ENCODE measurements at regions of chr16 and their contacts with region 1.

Region 1: DNA sequence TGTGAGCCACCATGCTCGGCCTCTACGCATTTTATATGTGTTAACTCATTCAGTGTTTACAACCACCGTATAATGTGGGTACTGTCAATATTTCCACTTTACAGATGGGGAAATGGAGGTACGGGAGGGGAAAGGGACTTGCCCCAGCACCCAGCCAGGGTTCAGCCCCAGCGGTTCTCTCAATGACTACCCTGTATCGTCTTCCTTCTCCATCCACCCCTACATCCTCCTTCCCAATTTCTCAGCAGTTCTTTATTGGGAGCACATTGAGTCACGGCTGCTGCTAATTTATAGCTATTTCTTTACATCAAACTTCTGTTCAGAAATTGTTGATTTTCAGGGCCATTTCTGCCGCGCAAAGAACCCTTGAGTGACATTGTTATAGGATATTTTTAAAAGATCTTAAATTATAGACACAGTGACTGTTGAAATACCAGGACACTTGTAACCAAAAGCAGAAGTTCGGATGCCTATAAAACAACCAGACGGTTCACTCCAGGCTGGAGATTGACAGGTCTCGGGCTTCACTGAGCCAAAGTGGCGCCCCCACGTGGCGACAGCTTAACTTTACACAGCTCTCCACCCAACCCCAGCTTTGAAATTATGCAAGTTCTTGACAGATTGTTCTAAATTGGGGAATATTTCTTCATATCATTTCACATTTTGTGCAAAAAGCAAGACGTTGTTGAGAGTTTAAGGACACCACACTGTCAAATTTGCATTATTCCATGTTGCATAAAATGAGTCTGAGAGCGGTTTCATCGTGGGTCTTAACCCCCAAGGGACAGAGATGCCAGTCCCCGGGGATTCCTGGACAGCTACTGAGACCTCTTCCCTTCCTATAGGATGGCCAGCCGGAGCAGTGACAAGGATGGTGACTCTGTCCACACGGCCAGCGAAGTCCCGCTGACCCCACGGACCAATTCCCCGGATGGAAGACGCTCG is 11.8 kb downstream of the SYT17 start:
- DNase-seq: peak; percentile 31
- ATAC-seq: peak; percentile 95
- H3K4me3 ChIP-seq: no peak overlapping the region
- H3K27ac ChIP-seq: no peak overlapping the region
- H3K4me1 ChIP-seq: no peaks in the 10 kb centered on the region
- H3K27me3 ChIP-seq: no peaks in the 10 kb centered on the region
- CTCF ChIP-seq: peak; percentile 71 to 91 (median 82)
- POLR2A ChIP-seq: no peak
- RAD21 ChIP-seq: peak; percentile 67

Region 2: DNA sequence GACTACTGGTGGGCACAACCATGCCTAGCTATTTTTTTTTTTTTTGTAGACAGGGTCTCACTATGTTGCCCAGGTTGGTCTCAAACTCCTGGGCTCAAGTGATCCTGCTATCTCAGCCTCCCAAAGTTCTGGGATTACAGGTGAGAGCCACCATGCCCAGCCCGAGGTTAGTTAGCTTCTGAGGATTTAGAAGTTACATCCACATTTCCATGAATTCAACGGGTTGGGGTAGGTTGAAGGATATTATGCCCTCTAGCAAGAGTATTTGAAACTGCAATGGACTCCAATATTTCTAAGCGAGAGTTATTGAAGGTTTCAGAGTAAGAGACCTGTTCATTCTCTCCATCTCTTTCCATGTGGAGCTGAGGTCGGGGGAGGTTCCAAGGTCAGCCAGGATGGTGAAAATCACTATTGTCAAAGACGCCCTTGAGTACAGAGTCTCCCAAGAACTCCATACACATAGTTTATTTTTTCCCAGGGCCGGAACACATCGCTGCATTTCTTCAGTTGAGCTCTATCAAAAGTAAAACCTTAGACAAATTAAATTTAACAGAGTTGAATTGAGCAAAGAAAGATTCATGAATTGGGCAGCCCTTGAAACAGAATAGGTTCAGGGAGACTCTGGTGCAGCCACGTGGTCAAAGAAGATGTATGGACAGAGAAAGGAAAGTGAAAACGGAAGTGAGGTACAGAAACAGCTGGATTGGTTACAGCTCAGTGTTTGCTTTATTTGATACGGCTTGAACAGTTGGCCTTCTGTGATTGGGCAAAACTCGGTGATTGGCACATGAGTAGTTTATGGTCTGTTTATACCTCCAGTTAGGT is 85.1 kb before region 1 on chr16:
- CTCF ChIA-PET with region 1: interaction called, 14 read pairs
- POLR2A ChIA-PET with region 1: no interaction called
- RAD21 ChIA-PET with region 1: no interaction called
- intact Hi-C with region 1: no loop called
- DNase-seq: peak; percentile 56
- ATAC-seq: peak; percentile 76
- H3K4me3 ChIP-seq: no peak overlapping the region
- H3K27ac ChIP-seq: peak overlapping the region; percentile 78; the same call in 1 of the 2 replicates
- H3K4me1 ChIP-seq: peaks cover 24 to 42% of the 10 kb centered on the region in 2 experiments
- H3K27me3 ChIP-seq: no peaks in the 10 kb centered on the region
- CTCF ChIP-seq: peak in 2 of 3 experiments; percentile 8 to 33; a peak in 2 of 6 replicates
- POLR2A ChIP-seq: no peak
- RAD21 ChIP-seq: no peak

Region 3: DNA sequence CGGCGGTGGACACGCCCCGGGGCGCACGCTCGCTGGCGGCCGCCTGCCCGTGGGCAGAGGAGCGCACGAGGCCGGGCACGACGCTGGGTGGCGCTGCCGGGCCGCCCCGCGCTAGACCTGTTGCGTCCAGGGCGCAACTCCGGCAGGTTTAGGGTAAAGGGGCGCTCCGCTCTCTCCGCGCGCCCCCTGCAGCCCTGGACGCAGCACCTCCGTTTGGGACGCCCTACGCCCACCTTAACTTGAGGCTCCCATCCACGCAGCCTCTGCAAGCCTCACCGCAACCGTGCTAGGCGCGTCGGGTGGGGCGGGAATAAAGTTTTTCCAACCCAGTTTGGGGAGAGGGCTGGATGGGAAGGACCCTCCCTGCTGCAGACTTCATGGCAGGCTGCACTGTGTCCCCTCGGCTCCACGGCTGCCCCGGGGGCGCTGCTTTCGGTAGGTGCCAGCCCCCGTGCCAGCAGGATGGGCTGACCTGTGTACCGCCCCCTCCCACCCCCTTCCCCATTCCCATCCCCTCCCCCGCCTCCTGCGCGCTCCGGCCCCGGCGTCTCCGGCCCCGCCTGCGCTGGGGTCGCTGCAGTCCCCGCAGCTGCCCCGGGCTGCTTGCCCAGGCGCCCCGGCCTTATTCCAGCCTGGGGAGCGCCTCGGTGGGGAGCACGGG is 12.0 kb before region 1 on chr16 and contains the start of gene SYT17:
- CTCF ChIA-PET with region 1: interaction called, 11 read pairs
- POLR2A ChIA-PET with region 1: no interaction called
- RAD21 ChIA-PET with region 1: interaction called in 1 of 2 experiments, 4 read pairs
- intact Hi-C with region 1: no loop called
- DNase-seq: peak; percentile 60
- ATAC-seq: peak; percentile 92
- H3K4me3 ChIP-seq: peak within 1 kb of the TSS; percentile 69 to 78
- H3K27ac ChIP-seq: peak within 1 kb of the TSS; percentile 72
- H3K4me1 ChIP-seq: peaks cover 4 to 36% of the 10 kb centered on the region in 2 experiments; a peak in 3 of 4 replicates
- H3K27me3 ChIP-seq: no peaks in the 10 kb centered on the region
- CTCF ChIP-seq: peak; percentile 68 to 95 (median 69)
- POLR2A ChIP-seq: no peak
- RAD21 ChIP-seq: peak; percentile 81
- total RNA-seq, gene SYT17: 10.3 TPM

Region 4: DNA sequence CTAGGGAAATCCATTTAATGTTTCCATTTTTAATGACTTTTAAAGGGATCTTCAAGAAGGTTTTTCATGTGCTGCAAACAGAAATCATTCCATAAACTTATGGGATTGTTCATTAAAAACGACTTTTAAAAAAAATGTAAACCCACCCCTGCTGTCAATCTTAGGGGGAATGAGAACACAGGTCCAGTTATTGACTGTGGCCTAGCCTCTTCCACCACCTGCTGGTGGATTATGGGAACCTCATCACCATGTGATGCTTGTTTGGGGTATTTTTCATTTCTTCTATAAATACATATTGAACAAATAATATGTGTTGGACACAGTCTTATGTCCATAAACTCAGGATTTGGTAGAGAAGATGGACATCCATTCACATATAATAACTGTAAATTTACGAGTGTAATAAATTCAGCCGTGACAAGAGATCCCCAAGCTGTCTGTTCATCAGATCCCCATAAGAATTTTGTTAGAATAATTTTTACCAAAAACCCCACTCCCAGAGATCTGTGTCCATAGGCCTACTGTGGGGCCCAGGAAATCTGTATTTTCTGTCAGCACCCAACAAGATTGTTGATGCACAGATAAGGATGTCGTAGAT is 195.8 kb after region 1 on chr16:
- CTCF ChIA-PET with region 1: interaction called, 4 read pairs
- POLR2A ChIA-PET with region 1: no interaction called
- RAD21 ChIA-PET with region 1: no interaction called
- intact Hi-C with region 1: loop called (anchors 1 kb)
- DNase-seq: peak; percentile 60
- ATAC-seq: peak; percentile 89
- H3K4me3 ChIP-seq: no peak overlapping the region
- H3K27ac ChIP-seq: no peak overlapping the region
- H3K4me1 ChIP-seq: no peaks in the 10 kb centered on the region
- H3K27me3 ChIP-seq: no peaks in the 10 kb centered on the region
- CTCF ChIP-seq: peak; percentile 85 to 96 (median 90)
- POLR2A ChIP-seq: no peak
- RAD21 ChIP-seq: peak; percentile 99